ENCODE measurements at regions of chr22 and their contacts with region 1.

Region 1: DNA sequence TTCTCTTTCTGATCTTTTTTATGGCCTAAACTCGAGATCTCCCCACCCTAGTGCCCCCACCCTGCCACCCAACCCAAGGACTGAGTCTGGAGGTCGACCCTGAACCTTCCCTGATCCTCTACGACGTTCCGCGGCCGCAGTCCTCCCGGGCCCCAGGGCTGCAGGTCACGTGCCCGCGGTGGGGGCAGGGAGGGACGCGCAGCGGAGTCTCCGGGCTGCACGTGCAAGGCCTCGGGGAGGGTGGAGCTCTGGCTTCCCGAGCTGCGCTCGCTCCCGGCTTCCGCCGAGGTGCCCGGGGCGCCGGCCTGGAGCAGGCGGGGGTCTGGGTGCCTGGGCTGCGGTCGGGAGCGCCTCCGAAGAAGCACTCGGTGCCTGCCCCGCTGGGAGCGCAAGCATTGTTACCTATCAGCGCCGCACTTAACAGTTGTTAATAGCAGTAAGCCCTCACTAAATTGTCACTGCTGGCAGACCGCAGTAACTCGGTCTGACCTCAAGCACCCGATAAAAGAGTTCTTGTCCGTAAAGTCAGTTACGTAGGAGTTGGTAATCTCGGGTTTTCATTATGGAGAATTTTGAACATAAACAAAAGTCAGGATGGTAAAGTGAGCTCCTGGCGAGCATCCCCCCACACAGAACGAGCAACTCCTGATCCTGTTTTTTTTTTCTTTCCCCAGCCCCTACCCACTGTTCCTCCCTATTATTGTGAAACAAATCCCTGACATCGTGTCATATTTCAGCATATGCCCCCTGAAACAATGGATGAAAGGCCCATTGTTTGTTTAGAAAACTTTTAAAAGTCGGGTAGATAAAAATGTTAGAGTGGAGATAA is 69.7 kb upstream of the EP300 start:
- DNase-seq: peak; percentile 91 to 96
- H3K4me3 ChIP-seq: peak overlapping the region; percentile 70 to 78
- H3K27ac ChIP-seq: peak overlapping the region; percentile 95 to 99
- H3K4me1 ChIP-seq: peaks cover 0 to 12% (median 8%) of the 10 kb centered on the region in 4 donors
- H3K27me3 ChIP-seq: no peaks in the 10 kb centered on the region
- CTCF ChIP-seq: no peak

Region 2: DNA sequence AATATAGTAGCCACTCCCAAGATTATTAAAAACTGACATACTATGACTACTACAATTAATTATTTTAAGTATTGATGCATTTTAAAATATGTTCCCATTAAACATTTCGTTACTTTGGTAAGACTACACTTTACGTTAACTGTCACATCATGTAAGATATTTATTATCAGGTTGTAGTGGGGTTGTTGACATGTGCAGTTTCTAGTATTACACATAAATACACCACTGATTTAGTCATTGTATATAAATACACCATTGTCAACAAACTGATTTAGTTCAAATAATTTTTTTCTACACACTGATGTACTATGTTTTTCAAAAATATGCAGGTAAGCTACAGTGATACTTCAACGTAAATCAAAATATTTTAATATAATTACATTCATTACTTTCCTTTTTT is 177.7 kb before region 1 on chr22:
- intact Hi-C with region 1: no loop called
- DNase-seq: no peak
- H3K4me3 ChIP-seq: no peak overlapping the region
- H3K27ac ChIP-seq: no peak overlapping the region
- H3K4me1 ChIP-seq: peaks cover 0 to 5% (median 0%) of the 10 kb centered on the region in 4 donors
- H3K27me3 ChIP-seq: no peaks in the 10 kb centered on the region
- CTCF ChIP-seq: no peak

Region 3: GRCh38 chr22:40950962-40951794 is 71.5 kb before region 1 on chr22 and contains the start of gene RBX1:
- intact Hi-C with region 1: loop called (anchors 2 kb)
- DNase-seq: peak; percentile 98 to 99
- H3K4me3 ChIP-seq: peak within 1 kb of the TSS; percentile 73 to 85
- H3K27ac ChIP-seq: peak within 1 kb of the TSS; percentile 94 to 98
- H3K4me1 ChIP-seq: peaks cover 0 to 20% (median 7%) of the 10 kb centered on the region in 4 donors
- H3K27me3 ChIP-seq: no peaks in the 10 kb centered on the region
- CTCF ChIP-seq: no peak

Region 4: GRCh38 chr22:41197038-41197972 is 174.6 kb after region 1 on chr22:
- intact Hi-C with region 1: loop called (anchors 5 kb)
- DNase-seq: peak; percentile 71 to 86
- H3K4me3 ChIP-seq: peak overlapping the region; percentile 57 to 90
- H3K27ac ChIP-seq: peak overlapping the region in 1 of 2 donors; percentile 42
- H3K4me1 ChIP-seq: peaks cover 0 to 17% (median 11%) of the 10 kb centered on the region in 4 donors
- H3K27me3 ChIP-seq: no peaks in the 10 kb centered on the region
- CTCF ChIP-seq: peak in 1 of 2 experiments; percentile 25